ENCODE measurements at regions of chr14 and their contacts with region 1.

Region 1: DNA sequence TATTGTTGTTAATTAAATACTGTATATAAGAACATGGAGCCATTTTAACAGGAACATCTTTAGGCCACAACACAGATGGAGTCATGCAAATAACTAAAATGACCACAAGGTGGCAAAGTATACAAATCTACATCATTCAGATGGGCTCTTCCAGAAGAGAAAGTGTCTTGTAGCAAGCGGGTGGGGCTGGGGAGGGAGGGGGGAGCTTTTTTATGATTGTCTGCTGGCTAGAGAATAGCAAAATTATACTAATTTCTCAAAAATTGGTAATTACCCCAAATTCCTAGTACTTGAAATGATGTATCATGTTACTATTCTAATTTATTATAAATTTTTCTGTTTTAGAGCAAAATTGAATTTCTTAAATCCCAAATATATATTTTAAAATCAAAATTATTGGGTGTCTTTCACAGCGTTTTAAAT is 378.7 kb downstream of the PRKD1 start:
- DNase-seq: peak; percentile 77
- ATAC-seq: peak; percentile 89
- H3K4me3 ChIP-seq: no peak overlapping the region
- H3K27ac ChIP-seq: no peak overlapping the region
- H3K4me1 ChIP-seq: no peaks in the 10 kb centered on the region
- H3K27me3 ChIP-seq: 0 out of 2 replicates have a peak, but pooled peaks cover 2% of the 10 kb centered on the region
- CTCF ChIP-seq: peak; percentile 67
- POLR2A ChIP-seq: no peak
- RAD21 ChIP-seq: peak; percentile 73

Region 2: GRCh38 chr14:30115756-30116155 is 566.8 kb after region 1 on chr14:
- CTCF ChIA-PET with region 1: no interaction called
- POLR2A ChIA-PET with region 1: no interaction called
- dilution Hi-C with region 1: no loop called
- in situ Hi-C with region 1: no loop called
- intact Hi-C with region 1: loop called (anchors 10 kb)
- DNase-seq: no peak
- ATAC-seq: peak; percentile 32; the same call in 1 of the 2 replicates
- H3K4me3 ChIP-seq: no peak overlapping the region
- H3K27ac ChIP-seq: no peak overlapping the region
- H3K4me1 ChIP-seq: no peaks in the 10 kb centered on the region; the same call in 1 of the 2 replicates
- H3K27me3 ChIP-seq: no peaks in the 10 kb centered on the region
- CTCF ChIP-seq: no peak
- POLR2A ChIP-seq: no peak
- RAD21 ChIP-seq: no peak